HepG2 (cell line): ENCODE measurements at regions of chr12 and their contacts with region 1.

Region 1: DNA sequence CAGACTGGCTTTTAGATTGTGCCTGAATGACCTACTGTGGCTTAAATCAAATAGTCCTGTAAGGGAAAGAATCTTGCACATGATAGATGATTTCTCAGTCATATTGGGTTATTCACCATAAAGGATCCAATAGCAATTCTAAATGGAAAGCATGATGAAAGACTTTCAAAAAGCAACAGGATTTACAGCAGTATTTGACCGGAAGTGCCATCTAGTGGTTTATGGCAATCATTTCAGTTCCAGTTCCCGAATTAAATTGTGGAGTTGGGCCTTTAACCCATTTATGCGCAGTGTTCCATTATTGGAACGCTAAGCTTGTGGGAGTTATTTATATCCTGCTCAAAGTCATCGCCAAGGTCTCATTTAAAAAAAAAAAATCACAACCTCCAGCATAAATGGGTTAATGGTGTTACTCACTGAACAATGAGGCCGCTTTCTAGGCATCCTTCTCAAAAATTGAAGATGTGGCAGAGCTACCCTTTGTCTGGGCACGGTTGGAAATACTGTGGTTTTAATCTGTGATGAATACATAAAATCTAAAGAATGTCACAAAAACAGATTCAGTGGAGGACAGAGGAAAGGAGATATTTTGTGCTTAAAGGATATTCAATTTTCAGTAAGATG is 60.8 kb upstream of the REP15 start:
- DNase-seq: peak; percentile 44
- ATAC-seq: no peak
- H3K4me3 ChIP-seq: no peak overlapping the region
- H3K27ac ChIP-seq: no peak overlapping the region
- H3K4me1 ChIP-seq: peaks cover 19% of the 10 kb centered on the region
- H3K27me3 ChIP-seq: no peaks in the 10 kb centered on the region
- CTCF ChIP-seq: peak; percentile 75
- EP300 ChIP-seq: no peak
- POLR2A ChIP-seq: no peak
- RAD21 ChIP-seq: peak; percentile 63

Region 2: GRCh38 chr12:27332407-27333301 is 302.8 kb before region 1 on chr12 and contains the start of gene BMAL2:
- CTCF ChIA-PET with region 1: no interaction called
- POLR2A ChIA-PET with region 1: no interaction called
- in situ Hi-C with region 1: no loop called
- intact Hi-C with region 1: loop called (anchors 5 kb)
- DNase-seq: peak; percentile 20
- ATAC-seq: peak; percentile 85
- H3K4me3 ChIP-seq: peak within 1 kb of the TSS; percentile 79 to 82 (median 80)
- H3K27ac ChIP-seq: peak within 1 kb of the TSS; percentile 52
- H3K4me1 ChIP-seq: peaks cover 50% of the 10 kb centered on the region
- H3K27me3 ChIP-seq: no peaks in the 10 kb centered on the region; a peak in 1 of 5 replicates
- CTCF ChIP-seq: no peak
- EP300 ChIP-seq: no peak
- POLR2A ChIP-seq: no peak; a peak in 2 of 4 replicates
- RAD21 ChIP-seq: 0 out of 2 replicates have a peak, but pooled peaks have one; percentile 10
- total RNA-seq, gene BMAL2: 27.4 and 37.1 TPM in 2 replicates

Region 3: GRCh38 chr12:27434673-27435565 is 200.5 kb before region 1 on chr12:
- CTCF ChIA-PET with region 1: interaction called, 11 read pairs
- POLR2A ChIA-PET with region 1: no interaction called
- in situ Hi-C with region 1: no loop called
- intact Hi-C with region 1: loop called (anchors 2 kb)
- DNase-seq: no peak
- ATAC-seq: peak; percentile 61
- H3K4me3 ChIP-seq: no peak overlapping the region
- H3K27ac ChIP-seq: no peak overlapping the region
- H3K4me1 ChIP-seq: peaks cover 10% of the 10 kb centered on the region
- H3K27me3 ChIP-seq: no peaks in the 10 kb centered on the region
- CTCF ChIP-seq: peak; percentile 39
- EP300 ChIP-seq: no peak
- POLR2A ChIP-seq: no peak
- RAD21 ChIP-seq: no peak

Region 4: DNA sequence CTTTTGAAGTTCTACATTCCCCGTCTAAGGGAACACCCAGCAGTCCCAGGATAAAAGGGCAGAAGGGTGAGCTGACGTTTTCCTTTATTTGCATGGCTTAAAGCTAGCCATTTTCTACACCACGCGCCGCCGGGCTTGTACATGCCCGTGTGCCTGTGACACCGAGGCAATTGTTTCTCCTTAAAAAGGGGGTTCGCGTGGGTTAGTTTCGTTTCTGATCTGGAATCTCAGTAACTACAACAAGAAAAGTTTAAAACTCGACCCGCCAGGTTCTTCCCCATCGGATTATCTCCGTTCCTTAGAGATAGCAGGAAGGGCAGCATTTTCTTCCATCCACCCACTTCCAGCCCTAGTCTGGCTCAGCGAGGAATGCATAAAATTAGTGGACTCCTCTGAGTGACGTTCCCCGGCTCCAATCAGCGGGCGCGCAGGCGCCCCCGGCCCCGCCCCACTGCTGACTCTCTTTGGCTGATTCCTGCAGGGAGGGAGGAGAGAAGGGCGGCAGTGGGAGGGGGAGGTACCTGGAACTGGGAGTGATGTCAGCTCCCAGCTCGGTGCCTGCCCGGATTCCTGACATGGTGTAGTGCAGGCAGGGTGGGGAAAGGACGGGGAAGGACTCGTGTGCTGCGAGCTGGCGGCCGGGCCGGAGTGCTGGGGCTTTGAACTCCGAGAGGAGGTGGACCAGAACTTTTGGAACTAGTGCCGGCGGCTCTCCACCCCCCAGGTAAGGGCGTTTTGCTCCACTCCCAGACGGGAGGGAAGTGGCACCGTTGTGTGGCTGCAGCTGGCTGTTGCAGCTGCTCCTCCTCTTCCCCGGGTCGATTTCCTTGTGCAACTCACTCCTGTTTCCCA is 111.6 kb before region 1 on chr12 and contains the start of gene PPFIBP1:
- CTCF ChIA-PET with region 1: no interaction called
- POLR2A ChIA-PET with region 1: no interaction called
- in situ Hi-C with region 1: no loop called
- intact Hi-C with region 1: loop called (anchors 1 kb)
- DNase-seq: peak; percentile 96
- ATAC-seq: peak; percentile 99
- H3K4me3 ChIP-seq: peak within 1 kb of the TSS; percentile 74 to 97 (median 93)
- H3K27ac ChIP-seq: peak within 1 kb of the TSS; percentile 82
- H3K4me1 ChIP-seq: peaks cover 33% of the 10 kb centered on the region
- H3K27me3 ChIP-seq: no peaks in the 10 kb centered on the region; a peak in 1 of 5 replicates
- CTCF ChIP-seq: peak; percentile 48
- EP300 ChIP-seq: no peak
- POLR2A ChIP-seq: peak; percentile 89 to 92
- RAD21 ChIP-seq: peak; percentile 54
- total RNA-seq, gene PPFIBP1: 21.8 and 32.0 TPM in 2 replicates

Region 5: GRCh38 chr12:27549801-27550652 is 85.4 kb before region 1 on chr12:
- CTCF ChIA-PET with region 1: no interaction called
- POLR2A ChIA-PET with region 1: no interaction called
- in situ Hi-C with region 1: no loop called
- intact Hi-C with region 1: loop called (anchors 5 kb)
- DNase-seq: peak; percentile 99
- ATAC-seq: peak; percentile 92
- H3K4me3 ChIP-seq: peak overlapping the region; percentile 21 to 57 (median 54); a peak in 5 of 6 replicates
- H3K27ac ChIP-seq: peak overlapping the region; percentile 86
- H3K4me1 ChIP-seq: peaks cover 87% of the 10 kb centered on the region
- H3K27me3 ChIP-seq: no peaks in the 10 kb centered on the region
- CTCF ChIP-seq: no peak; the same call in 1 of the 2 replicates
- EP300 ChIP-seq: peak; percentile 91 to 92; a peak in 3 of 4 replicates
- POLR2A ChIP-seq: peak in 1 of 2 experiments; percentile 46; a peak in 1 of 4 replicates
- RAD21 ChIP-seq: 0 out of 2 replicates have a peak, but pooled peaks have one; percentile 7